Endothelial cell of umbilical vein (primary cell): ENCODE measurements at regions of chr7 and their contacts with region 1.

Region 1: DNA sequence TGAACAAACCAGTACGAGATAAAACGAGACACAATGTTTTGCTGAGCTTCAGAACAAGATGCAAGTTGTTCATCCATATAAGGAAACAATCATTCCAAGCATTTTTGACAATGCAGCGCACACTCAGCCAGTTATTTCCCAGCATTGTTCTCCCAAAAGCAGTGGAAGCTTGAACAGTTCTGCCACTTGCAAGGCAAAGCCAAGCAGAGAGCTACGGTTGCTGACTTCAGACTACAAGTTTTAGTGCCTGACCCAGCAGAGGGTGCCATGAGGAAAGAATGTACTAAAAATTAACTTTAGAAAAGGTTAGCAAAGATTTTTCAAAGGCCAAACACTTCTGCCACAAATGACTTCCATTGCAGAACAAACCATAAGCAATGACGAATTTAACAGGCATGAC is 152.5 kb downstream of the SLC25A13 start:
- DNase-seq: peak; percentile 88
- H3K4me3 ChIP-seq: no peak overlapping the region
- H3K27ac ChIP-seq: no peak overlapping the region
- H3K4me1 ChIP-seq: peaks cover 9% of the 10 kb centered on the region
- H3K27me3 ChIP-seq: no peaks in the 10 kb centered on the region
- CTCF ChIP-seq: no peak
- POLR2A ChIP-seq: no peak

Region 2: GRCh38 chr7:96143495-96144259 is 25.8 kb before region 1 on chr7:
- CTCF ChIA-PET with region 1: no interaction called
- POLR2A ChIA-PET with region 1: interaction called, 14 read pairs
- dilution Hi-C with region 1: no loop called
- intact Hi-C with region 1: no loop called
- DNase-seq: no peak
- H3K4me3 ChIP-seq: no peak overlapping the region
- H3K27ac ChIP-seq: no peak overlapping the region
- H3K4me1 ChIP-seq: no peaks in the 10 kb centered on the region
- H3K27me3 ChIP-seq: no peaks in the 10 kb centered on the region
- CTCF ChIP-seq: no peak
- POLR2A ChIP-seq: no peak

Region 3: DNA sequence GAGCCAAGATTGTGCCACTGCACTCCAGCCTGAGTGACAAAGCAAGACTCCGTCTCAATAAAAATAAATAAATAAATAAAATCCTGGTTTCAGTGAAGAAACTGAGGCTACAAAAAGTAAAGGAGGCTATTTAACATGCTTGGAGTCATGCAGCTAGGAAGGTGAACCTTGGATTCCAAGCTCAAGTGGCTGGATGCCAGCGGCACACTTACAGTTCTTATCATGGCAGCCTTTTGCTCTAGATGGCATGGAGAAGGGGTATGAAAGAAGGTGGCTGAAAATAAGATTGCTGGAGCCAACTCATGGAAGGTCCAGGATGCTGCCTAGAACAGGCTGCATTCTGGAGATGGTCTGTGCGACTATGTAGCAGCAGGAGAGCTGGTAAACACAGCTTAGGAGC is 17.6 kb before region 1 on chr7:
- CTCF ChIA-PET with region 1: interaction called, 3 read pairs
- POLR2A ChIA-PET with region 1: no interaction called
- dilution Hi-C with region 1: no loop called
- intact Hi-C with region 1: loop called (anchors 2 kb)
- DNase-seq: no peak
- H3K4me3 ChIP-seq: no peak overlapping the region
- H3K27ac ChIP-seq: no peak overlapping the region
- H3K4me1 ChIP-seq: no peaks in the 10 kb centered on the region
- H3K27me3 ChIP-seq: no peaks in the 10 kb centered on the region
- CTCF ChIP-seq: no peak
- POLR2A ChIP-seq: no peak

Region 4: DNA sequence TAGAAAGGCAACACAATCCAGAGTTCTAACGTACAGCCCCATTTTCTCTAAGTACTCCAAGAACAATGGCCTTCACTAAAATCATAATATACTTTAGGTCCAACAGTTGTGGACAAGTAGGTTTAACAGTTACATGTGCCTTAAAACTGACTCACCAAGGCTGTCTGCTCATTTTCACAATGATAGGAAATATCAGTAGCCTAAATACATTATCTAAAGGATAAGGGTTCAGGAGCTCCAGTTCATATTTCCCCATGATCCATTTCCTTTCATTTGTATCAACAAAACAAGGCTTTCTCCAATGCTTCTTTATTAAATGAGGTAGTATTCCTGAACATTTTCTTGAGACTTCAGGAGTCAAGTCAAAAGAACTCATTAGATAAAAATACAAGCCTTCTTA is 11.6 kb before region 1 on chr7:
- CTCF ChIA-PET with region 1: interaction called, 3 read pairs
- POLR2A ChIA-PET with region 1: no interaction called
- dilution Hi-C with region 1: no loop called
- intact Hi-C with region 1: loop called (anchors 1 kb)
- DNase-seq: peak; percentile 92
- H3K4me3 ChIP-seq: no peak overlapping the region
- H3K27ac ChIP-seq: peak overlapping the region; percentile 34
- H3K4me1 ChIP-seq: peaks cover 12% of the 10 kb centered on the region
- H3K27me3 ChIP-seq: no peaks in the 10 kb centered on the region
- CTCF ChIP-seq: no peak
- POLR2A ChIP-seq: no peak